Gastrocnemius medialis (tissue), 4 donors: ENCODE measurements at regions of chr1 and their contacts with region 1.

Region 1: GRCh38 chr1:182143154-182143657 is 81.7 kb upstream of the ZNF648 start:
- DNase-seq: peak; percentile 89 to 91
- ATAC-seq: peak; percentile 62 to 72
- H3K4me3 ChIP-seq: no peak overlapping the region
- H3K27ac ChIP-seq: peak overlapping the region; percentile 94 to 98 (median 96)
- H3K4me1 ChIP-seq: peaks cover 27 to 28% of the 10 kb centered on the region in 2 donors
- H3K27me3 ChIP-seq: no peaks in the 10 kb centered on the region
- CTCF ChIP-seq: peak; percentile 96 to 99 (median 98)
- POLR2A ChIP-seq: no peak

Region 2: DNA sequence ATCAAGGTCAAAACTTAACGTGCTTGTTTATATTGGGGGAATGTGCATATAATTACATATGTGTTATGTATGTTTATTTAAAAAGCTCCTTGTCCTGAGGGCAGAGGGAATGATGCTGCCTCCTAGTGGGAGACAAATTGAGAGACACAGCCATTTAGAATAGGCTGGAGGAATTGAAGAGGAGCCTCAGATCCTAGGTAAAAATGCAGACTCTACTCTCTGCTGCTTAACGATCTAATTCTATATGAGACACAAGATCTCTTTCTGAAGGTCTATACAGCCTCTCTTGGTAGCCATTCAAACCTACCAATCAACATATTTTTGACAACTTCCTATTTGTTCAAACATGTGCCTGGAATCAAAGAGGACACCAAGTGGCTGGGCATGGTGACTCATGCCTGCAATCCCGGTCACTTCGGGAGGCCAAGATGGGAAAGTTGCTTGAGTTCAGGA is 54.9 kb after region 1 on chr1:
- in situ Hi-C with region 1: loop called in 2 of 4 experiments (anchors 10 kb)
- intact Hi-C with region 1: loop called (anchors 1 kb)
- DNase-seq: peak in 1 of 2 donors; percentile 36
- ATAC-seq: no peak
- H3K4me3 ChIP-seq: no peak overlapping the region
- H3K27ac ChIP-seq: peak overlapping the region; percentile 64 to 83 (median 74)
- H3K4me1 ChIP-seq: peaks cover 21 to 35% of the 10 kb centered on the region in 2 donors
- H3K27me3 ChIP-seq: no peaks in the 10 kb centered on the region
- CTCF ChIP-seq: peak in 3 of 5 experiments; percentile 19 to 36 (median 27)
- POLR2A ChIP-seq: no peak

Region 3: GRCh38 chr1:182291584-182292192 is 148.5 kb after region 1 on chr1:
- in situ Hi-C with region 1: loop called in 3 of 4 experiments (anchors 5 to 10 kb)
- intact Hi-C with region 1: loop called (anchors 1 kb)
- DNase-seq: peak; percentile 72 to 78
- ATAC-seq: peak; percentile 37 to 54
- H3K4me3 ChIP-seq: peak overlapping the region in 1 of 4 donors; percentile 2
- H3K27ac ChIP-seq: peak overlapping the region; percentile 85 to 94 (median 90)
- H3K4me1 ChIP-seq: peaks cover 45 to 53% of the 10 kb centered on the region in 2 donors
- H3K27me3 ChIP-seq: no peaks in the 10 kb centered on the region
- CTCF ChIP-seq: no peak
- POLR2A ChIP-seq: peak; percentile 30 to 49

Region 4: DNA sequence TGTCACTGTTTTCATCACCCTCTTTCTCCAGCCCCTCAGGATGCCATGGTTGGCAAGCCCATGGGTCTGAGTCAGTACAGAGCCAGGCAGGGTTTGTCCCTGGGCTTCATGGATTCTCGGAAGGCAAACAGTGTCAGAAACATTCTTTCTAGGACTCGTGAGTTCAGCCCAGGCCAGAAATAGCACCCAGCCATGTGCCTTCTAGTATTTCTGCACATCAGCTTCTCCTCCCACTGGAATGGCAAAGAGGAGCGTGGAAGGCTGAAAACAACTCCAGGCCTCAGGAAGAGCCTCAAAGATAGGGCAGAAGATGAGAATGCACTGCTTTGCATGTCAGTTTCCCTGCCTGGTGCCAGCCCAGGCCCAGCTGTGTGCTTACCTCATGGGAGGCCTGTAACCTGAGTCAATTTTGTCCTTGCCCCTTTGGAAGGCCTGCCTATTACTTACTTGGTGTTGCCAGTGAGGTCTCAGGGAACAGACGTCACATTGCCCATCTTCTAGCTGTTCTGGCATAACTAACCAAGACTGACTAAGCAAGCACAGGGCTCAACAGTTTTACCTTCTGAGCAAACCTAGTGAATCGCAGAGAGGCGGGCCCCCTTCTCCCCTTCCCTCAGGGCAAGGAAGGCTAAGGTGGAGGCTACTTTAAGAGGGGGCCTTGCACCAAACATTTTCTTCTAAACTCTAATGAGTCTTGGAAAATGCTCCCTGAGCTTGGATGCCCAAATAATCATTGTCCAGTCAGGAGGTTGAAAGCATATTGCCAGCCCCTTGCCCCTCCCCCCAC is 205.9 kb after region 1 on chr1:
- in situ Hi-C with region 1: no loop called
- intact Hi-C with region 1: loop called (anchors 5 kb)
- DNase-seq: peak; percentile 85 to 92
- ATAC-seq: peak; percentile 73 to 75
- H3K4me3 ChIP-seq: no peak overlapping the region
- H3K27ac ChIP-seq: peak overlapping the region; percentile 89 to 100 (median 94)
- H3K4me1 ChIP-seq: peaks cover 46 to 50% of the 10 kb centered on the region in 2 donors
- H3K27me3 ChIP-seq: no peaks in the 10 kb centered on the region
- CTCF ChIP-seq: peak in 1 of 5 experiments; percentile 17
- POLR2A ChIP-seq: peak; percentile 67 to 79

Region 5: GRCh38 chr1:182397771-182398393 is 254.7 kb after region 1 on chr1:
- in situ Hi-C with region 1: loop called in 3 of 4 experiments (anchors 5 kb)
- intact Hi-C with region 1: loop called (anchors 1 kb)
- DNase-seq: peak in 1 of 2 donors; percentile 58
- ATAC-seq: peak; percentile 34 to 66
- H3K4me3 ChIP-seq: no peak overlapping the region
- H3K27ac ChIP-seq: peak overlapping the region; percentile 57 to 73 (median 72)
- H3K4me1 ChIP-seq: peaks cover 21 to 25% of the 10 kb centered on the region in 2 donors
- H3K27me3 ChIP-seq: no peaks in the 10 kb centered on the region
- CTCF ChIP-seq: no peak
- POLR2A ChIP-seq: no peak